ENCODE measurements at regions of chr19 and their contacts with region 1.

Region 1: GRCh38 chr19:6241680-6242377 is 37.9 kb downstream of the MLLT1 start:
- DNase-seq: no peak
- H3K4me3 Mint-ChIP-seq: no peak overlapping the region
- H3K27ac Mint-ChIP-seq: no peak overlapping the region
- H3K4me1 Mint-ChIP-seq: peaks cover 37% of the 10 kb centered on the region
- H3K27me3 Mint-ChIP-seq: no peaks in the 10 kb centered on the region

Region 2: GRCh38 chr19:6161271-6161850 is 80.5 kb before region 1 on chr19:
- intact Hi-C with region 1: loop called (anchors 10 kb)
- DNase-seq: peak; percentile 77
- H3K4me3 Mint-ChIP-seq: no peak overlapping the region
- H3K27ac Mint-ChIP-seq: peak overlapping the region; percentile 42
- H3K4me1 Mint-ChIP-seq: peaks cover 5% of the 10 kb centered on the region
- H3K27me3 Mint-ChIP-seq: peaks cover 2% of the 10 kb centered on the region

Measured in activated T-helper 2 cell treated with anti-CD3 and anti-CD28 coated beads, Interferon-gamma antibody, Interleukin-2, Interleukin-4, amounts not matched to agents 10 μg/mL and 5 μg/mL and 100 μg/mL, durations not matched to agents 14 hours and 24 hours and 36 hours (primary cell).